Activated CD4-positive, alpha-beta memory T cell treated with anti-CD3 and anti-CD28 coated beads for 36 hours (primary cell): ENCODE measurements at regions of chr3 and their contacts with region 1.

Region 1: DNA sequence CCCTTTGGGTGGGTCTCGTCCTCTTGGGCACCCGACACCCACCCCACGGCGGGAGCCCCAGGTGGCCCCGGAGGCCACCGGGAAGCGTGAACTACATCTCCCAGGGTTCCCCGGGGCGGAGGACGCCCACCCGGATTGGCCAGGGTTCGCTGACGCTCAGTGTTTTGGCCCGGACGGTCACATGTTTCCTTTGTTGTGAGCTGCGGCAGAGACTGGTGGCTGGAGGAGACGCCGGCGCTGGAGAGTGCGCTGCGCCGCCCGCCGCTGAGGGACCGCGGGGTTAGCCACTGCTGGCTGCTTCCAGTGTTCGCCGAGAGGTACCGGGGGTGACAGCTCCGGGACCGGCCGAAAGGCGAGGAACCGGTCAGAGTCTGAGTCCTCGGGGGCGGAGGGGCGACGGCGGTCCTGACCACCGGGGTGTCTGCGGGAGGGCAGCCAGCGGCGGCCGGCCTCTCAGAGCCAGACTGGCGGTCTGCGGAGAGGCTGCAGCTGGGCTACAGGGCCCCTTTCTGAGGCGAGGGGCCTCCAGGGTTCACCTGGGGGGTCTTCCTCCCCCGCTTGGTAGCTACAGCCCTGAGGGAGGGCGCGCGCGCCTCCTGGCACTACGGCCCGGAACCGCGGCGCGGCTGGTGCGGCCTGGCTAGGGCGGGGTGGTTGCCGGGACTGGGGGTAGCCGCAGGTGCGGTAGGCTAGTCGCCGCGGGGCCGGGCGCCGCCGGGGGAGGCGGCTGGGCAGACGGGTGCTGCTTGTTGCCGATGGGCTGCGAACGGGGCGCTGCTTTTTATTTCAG is at the start of gene KLHL24:
- DNase-seq: peak; percentile 95
- H3K4me3 Mint-ChIP-seq: peak within 1 kb of the TSS; percentile 92
- H3K27ac Mint-ChIP-seq: peak within 1 kb of the TSS; percentile 88
- H3K4me1 Mint-ChIP-seq: peaks cover 28% of the 10 kb centered on the region
- H3K27me3 Mint-ChIP-seq: no peaks in the 10 kb centered on the region
- total RNA-seq, gene KLHL24: 15.6 to 19.5 TPM

Region 2: GRCh38 chr3:182792901-182793662 is 842.5 kb before region 1 on chr3 and contains the start of gene ATP11B:
- CTCF ChIA-PET with region 1: no interaction called
- POLR2A ChIA-PET with region 1: no interaction called
- intact Hi-C with region 1: loop called (anchors 5 kb)
- DNase-seq: peak; percentile 82
- H3K4me3 Mint-ChIP-seq: peak within 1 kb of the TSS; percentile 93
- H3K27ac Mint-ChIP-seq: peak within 1 kb of the TSS; percentile 94
- H3K4me1 Mint-ChIP-seq: peaks cover 24% of the 10 kb centered on the region
- H3K27me3 Mint-ChIP-seq: peaks cover 2% of the 10 kb centered on the region
- total RNA-seq, gene ATP11B: 93.9 to 96.0 TPM

Region 3: DNA sequence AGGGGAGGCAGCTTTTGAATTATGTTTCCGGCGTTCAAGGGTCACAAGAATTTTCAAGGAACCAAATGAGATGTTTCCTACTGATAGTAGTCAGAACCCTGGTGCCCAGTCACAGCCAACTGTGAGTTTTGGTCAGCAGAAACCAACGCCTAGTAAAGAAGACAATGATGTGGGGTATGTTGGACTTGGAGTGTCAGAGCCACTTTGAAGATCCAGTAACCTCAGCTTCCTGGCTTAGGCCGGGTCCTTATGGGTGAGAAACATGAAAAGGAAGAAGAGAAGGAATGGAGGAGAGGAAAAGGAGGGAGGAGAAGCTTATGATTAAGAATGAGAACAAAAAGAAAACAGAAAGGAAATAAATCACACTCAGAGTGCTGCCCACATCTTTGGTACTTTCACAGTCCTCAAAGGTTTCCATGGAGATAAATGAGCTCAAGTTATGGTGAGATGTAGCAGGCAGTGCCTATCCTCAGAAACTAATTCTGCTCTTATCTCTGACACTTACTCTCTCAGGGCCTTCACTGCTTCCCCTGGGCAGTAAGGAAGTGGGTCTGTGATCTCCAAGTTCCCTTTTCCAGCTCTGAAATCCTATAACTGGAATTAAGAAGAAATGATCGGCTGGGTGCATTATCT is 205.2 kb before region 1 on chr3:
- CTCF ChIA-PET with region 1: no interaction called
- POLR2A ChIA-PET with region 1: no interaction called
- intact Hi-C with region 1: loop called (anchors 2 kb)
- DNase-seq: peak; percentile 66
- H3K4me3 Mint-ChIP-seq: peak overlapping the region; percentile 1
- H3K27ac Mint-ChIP-seq: peak overlapping the region; percentile 43
- H3K4me1 Mint-ChIP-seq: peaks cover 53% of the 10 kb centered on the region
- H3K27me3 Mint-ChIP-seq: peaks cover 3% of the 10 kb centered on the region

Region 4: DNA sequence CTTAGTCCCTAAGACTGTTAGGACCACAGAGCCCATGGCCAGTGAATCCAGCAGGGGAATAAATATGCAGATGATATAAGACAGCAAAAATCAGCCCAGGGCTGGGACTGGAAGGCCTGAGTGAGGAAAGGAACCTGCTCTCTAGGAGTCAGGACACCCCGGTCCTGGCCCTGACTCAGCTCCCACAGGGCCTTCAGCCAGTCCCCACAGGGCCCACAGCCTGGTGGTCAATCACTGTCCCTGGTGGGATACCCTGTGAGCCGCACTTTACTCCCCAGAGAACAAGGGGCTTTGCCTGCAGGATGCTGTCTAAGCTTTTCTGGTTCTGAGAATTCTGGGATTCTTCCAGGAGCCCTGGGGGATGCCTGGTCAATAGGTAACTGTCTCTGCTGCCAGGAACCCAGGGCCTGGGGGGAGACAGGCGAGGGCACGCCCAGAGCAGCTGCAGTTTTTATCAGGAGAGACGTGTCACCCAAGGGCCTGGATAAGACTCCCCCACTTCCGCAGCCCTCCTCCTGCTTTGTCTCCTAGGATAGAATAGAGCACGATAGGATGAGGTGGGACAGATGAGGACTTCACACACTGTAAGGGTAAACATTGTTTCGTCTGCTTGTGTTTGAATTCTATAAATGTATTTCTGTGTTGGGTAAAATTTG is 157.7 kb before region 1 on chr3:
- CTCF ChIA-PET with region 1: no interaction called
- POLR2A ChIA-PET with region 1: no interaction called
- intact Hi-C with region 1: no loop called
- DNase-seq: no peak
- H3K4me3 Mint-ChIP-seq: no peak overlapping the region
- H3K27ac Mint-ChIP-seq: no peak overlapping the region
- H3K4me1 Mint-ChIP-seq: peaks cover 6% of the 10 kb centered on the region
- H3K27me3 Mint-ChIP-seq: no peaks in the 10 kb centered on the region

Region 5: DNA sequence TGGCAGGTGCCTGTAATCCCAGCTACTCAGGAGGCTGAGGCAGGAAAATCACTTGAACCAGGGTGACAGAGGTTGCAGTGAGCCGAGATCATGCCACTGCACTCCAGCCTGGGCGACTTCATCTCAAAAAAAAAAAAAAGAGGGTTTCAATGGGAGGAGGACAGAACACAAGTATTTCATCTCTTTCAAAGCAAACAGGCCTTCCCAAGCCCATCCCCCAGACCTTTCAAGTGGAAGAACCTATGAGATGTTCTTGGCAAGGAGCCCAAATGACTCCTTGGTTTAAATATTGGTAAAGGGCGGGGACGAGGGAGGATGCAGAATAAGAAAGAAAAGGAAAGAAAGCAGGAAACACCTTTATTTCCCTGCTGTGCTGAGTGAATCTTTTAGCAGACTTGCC is 145.0 kb before region 1 on chr3:
- CTCF ChIA-PET with region 1: no interaction called
- POLR2A ChIA-PET with region 1: no interaction called
- intact Hi-C with region 1: no loop called
- DNase-seq: no peak
- H3K4me3 Mint-ChIP-seq: no peak overlapping the region
- H3K27ac Mint-ChIP-seq: no peak overlapping the region
- H3K4me1 Mint-ChIP-seq: no peaks in the 10 kb centered on the region
- H3K27me3 Mint-ChIP-seq: no peaks in the 10 kb centered on the region

Region 6: GRCh38 chr3:183555541-183556081 is 80.0 kb before region 1 on chr3 and contains the start of gene KLHL6:
- CTCF ChIA-PET with region 1: no interaction called
- POLR2A ChIA-PET with region 1: interaction called, 45 read pairs
- intact Hi-C with region 1: loop called (anchors 1 kb)
- DNase-seq: peak; percentile 90
- H3K4me3 Mint-ChIP-seq: peak within 1 kb of the TSS; percentile 100
- H3K27ac Mint-ChIP-seq: peak within 1 kb of the TSS; percentile 99
- H3K4me1 Mint-ChIP-seq: peaks cover 52% of the 10 kb centered on the region
- H3K27me3 Mint-ChIP-seq: no peaks in the 10 kb centered on the region
- total RNA-seq, gene KLHL6: 63.5 to 65.2 TPM

Region 7: DNA sequence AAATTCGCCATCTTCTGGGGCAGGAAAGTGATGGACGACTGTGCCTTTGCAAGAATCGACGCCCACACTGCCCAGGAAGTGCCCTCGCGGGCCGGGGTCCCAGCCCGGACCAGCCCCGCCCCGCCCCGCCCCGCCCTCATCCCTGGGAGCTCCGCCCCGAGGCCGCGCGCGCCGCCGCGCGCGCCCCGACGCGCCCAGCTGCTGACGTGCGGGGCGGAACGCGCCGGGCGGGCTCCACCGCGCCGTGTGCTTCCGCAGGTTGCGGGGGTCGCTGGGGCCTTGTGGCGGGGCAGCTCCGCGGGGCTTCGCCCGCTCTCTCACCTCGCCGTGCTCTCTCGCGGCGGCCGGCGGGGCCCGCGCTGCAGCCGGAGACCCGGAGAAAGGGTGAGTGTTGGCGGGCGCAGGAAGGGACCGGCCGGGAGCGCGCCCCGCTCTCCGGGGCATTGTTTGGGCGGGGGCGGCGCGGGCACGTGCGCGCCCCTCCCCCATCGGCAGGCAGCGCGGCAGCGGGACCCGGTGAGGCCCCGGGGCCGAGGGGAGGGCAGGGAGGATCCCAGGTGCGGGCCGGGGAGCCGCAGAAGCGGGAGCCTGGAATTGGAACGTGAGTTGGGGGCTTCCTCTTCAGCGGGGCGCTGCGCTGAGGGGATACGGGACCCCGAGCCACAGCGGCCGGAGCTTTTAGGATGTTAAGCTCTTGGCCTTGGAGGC is 62.1 kb after region 1 on chr3 and contains the start of gene YEATS2:
- CTCF ChIA-PET with region 1: interaction called, 6 read pairs
- POLR2A ChIA-PET with region 1: interaction called, 49 read pairs
- intact Hi-C with region 1: loop called (anchors 1 kb)
- DNase-seq: peak; percentile 88
- H3K4me3 Mint-ChIP-seq: peak within 1 kb of the TSS; percentile 82
- H3K27ac Mint-ChIP-seq: peak within 1 kb of the TSS; percentile 86
- H3K4me1 Mint-ChIP-seq: peaks cover 32% of the 10 kb centered on the region
- H3K27me3 Mint-ChIP-seq: no peaks in the 10 kb centered on the region
- total RNA-seq, gene YEATS2: 45.4 to 48.8 TPM

Region 8: DNA sequence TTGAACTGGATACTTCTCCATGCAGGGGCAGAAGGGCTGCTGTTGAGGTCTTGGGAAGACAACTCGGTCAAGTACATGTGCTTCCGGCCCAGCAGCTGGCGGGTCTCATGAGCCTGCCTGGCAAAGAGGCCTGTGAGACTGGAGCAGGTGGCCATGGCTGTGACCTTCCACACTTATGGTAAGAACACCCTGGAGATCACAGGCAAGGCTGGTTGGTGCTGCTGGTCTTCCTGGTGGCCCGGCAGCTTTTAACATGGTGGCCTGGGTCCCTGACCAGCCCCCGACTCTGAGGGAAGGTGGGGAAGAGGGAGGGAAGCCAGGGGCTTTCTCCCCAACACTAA is 759.7 kb after region 1 on chr3:
- CTCF ChIA-PET with region 1: no interaction called
- POLR2A ChIA-PET with region 1: no interaction called
- intact Hi-C with region 1: no loop called
- DNase-seq: no peak
- H3K4me3 Mint-ChIP-seq: no peak overlapping the region
- H3K27ac Mint-ChIP-seq: no peak overlapping the region
- H3K4me1 Mint-ChIP-seq: no peaks in the 10 kb centered on the region
- H3K27me3 Mint-ChIP-seq: peaks cover 4% of the 10 kb centered on the region

Region 9: DNA sequence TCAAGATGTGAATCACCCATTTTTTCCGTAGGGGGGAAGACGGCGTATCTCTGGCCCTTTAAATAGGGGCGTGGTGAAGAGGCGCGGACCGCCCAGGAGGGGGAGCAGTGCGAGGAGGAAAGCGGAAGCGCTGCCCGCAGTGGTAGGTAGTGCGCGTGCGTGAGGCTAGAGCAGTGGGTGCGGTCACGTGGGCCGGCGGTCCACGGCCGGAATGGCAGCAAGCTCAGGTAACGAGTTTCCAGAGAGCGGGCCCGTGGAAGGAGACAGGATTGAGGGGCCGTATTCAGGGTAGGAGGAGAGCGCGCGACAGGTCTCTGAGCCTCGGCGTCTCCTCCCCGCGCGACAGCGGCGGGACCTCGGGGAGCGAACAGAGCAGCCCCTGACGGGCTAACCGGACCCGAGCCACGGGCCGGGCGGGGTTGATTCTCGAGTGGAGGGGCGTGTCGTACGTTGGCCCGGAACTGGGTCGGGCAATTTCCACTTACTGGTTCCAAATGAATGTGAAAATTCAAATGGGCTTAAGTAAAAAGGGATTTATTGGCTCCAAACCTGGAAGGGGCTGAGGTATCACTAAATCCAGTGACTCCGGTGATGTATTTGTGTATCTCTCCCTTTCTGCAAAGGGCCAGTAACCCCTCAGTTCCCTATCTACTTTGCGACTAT is 1176.5 kb after region 1 on chr3 and contains the start of gene VPS8:
- CTCF ChIA-PET with region 1: no interaction called
- POLR2A ChIA-PET with region 1: no interaction called
- intact Hi-C with region 1: loop called (anchors 5 kb)
- DNase-seq: peak; percentile 98
- H3K4me3 Mint-ChIP-seq: peak within 1 kb of the TSS; percentile 87
- H3K27ac Mint-ChIP-seq: peak within 1 kb of the TSS; percentile 84
- H3K4me1 Mint-ChIP-seq: peaks cover 51% of the 10 kb centered on the region
- H3K27me3 Mint-ChIP-seq: no peaks in the 10 kb centered on the region
- total RNA-seq, gene VPS8: 28.7 to 32.3 TPM